Activated T-helper 1 cell treated with anti-CD3 and anti-CD28 coated beads, Interleukin-12 subunit alpha, Interleukin-12 subunit beta, Interleukin-2, Interleukin-4 antibody, amounts not matched to agents 30 ng/mL and 10 ng/mL and 1 ng/mL, durations not matched to agents 14 hours and 24 hours and 36 hours (primary cell): ENCODE measurements at regions of chr14 and their contacts with region 1.

Region 1: DNA sequence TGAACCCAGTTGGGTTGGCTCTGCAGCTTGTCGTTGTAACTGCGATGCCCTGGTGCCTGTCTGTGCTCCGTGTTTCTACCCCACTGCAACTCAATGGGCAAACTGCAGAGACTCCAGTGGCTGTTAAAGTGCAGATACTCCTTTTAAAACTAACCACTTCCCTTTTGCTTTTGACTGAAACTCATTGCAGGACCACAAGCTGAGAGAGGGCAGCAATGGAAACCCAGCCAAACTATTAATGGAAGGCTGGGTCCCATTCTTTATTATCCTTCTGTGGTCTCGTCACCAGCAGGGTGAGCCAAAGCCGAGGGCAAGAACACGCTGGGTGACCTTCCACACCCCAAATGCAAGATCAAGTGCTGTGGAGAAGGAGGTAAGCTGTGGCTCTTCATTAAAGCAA is 910.4 kb downstream of the VRK1 start:
- DNase-seq: no peak
- H3K4me3 Mint-ChIP-seq: peak overlapping the region; percentile 9
- H3K27ac Mint-ChIP-seq: no peak overlapping the region
- H3K4me1 Mint-ChIP-seq: peaks cover 79% of the 10 kb centered on the region
- H3K27me3 Mint-ChIP-seq: no peaks in the 10 kb centered on the region

Region 2: DNA sequence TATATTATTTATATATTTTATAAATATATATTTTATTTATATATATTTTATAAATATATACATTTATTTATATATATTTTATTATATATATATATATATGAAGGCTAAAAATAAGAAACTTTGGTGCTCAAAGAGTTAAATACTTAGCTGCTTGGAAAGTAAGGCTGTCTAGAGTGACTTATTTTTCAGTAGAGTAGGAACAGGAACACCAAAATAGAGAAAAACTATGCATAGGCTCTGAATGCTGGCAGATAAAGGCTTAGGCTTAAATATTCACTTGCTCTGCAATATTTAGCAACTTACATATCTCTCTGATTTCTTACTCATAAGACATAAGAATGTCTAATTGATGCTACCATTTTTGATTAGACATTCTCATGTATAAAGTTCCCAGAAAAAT is 80.8 kb after region 1 on chr14:
- intact Hi-C with region 1: loop called (anchors 5 kb)
- DNase-seq: no peak
- H3K4me3 Mint-ChIP-seq: no peak overlapping the region
- H3K27ac Mint-ChIP-seq: no peak overlapping the region
- H3K4me1 Mint-ChIP-seq: peaks cover 25% of the 10 kb centered on the region
- H3K27me3 Mint-ChIP-seq: no peaks in the 10 kb centered on the region